ENCODE measurements at regions of chr14 and their contacts with region 1.

Region 1: DNA sequence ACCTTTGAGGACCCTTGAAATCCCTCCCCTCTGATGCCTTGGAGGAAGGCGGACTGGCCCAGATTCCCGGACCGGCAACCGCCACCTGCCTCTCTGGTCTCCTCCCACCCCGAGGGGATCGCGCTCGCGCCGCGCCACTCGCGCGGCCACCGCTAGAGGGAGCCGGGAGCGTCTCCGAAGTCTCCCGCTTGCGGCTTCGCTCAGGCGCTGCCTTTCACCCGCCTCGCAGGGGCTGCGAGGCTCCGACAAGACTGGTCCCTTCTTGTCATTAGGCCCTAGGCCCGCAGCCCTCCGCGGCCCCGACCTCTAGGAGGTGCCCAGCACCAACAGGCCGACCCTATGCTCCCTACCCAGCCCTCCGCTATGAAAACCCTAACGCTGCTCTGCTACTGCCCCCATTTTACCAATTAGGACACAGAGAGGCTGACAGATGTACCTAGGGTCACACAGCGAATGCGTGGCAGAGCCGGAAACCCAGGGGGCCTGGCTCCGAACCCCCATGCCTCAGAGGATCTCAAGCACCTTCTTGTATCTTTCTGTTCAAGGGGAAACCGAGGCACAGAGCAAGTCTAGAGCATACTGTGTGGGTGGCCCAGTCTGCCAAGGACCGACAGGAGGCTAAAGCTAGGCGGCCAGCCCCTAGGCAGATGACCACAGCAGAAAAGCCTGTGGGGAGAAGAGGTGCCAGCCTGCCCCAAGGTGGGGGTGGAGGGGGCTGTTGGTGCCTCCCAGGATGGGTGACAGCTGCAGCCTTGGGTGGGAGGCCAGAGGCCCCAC is 21.4 kb upstream of the VSX2 start:
- DNase-seq: peak; percentile 47
- H3K4me3 ChIP-seq: peak overlapping the region in 1 of 3 experiments; percentile 22
- H3K27ac ChIP-seq: no peak overlapping the region
- H3K4me1 ChIP-seq: no peaks in the 10 kb centered on the region
- H3K27me3 ChIP-seq: peaks cover 5% of the 10 kb centered on the region
- CTCF ChIP-seq: peak; percentile 73 to 96

Region 2: GRCh38 chr14:74135426-74135825 is 82.4 kb before region 1 on chr14:
- CTCF ChIA-PET with region 1: no interaction called
- dilution Hi-C with region 1: loop called (anchors 5 kb)
- in situ Hi-C with region 1: no loop called
- intact Hi-C with region 1: no loop called
- DNase-seq: peak; percentile 19
- H3K4me3 ChIP-seq: no peak overlapping the region
- H3K27ac ChIP-seq: no peak overlapping the region
- H3K4me1 ChIP-seq: no peaks in the 10 kb centered on the region
- H3K27me3 ChIP-seq: no peaks in the 10 kb centered on the region
- CTCF ChIP-seq: no peak

Region 3: DNA sequence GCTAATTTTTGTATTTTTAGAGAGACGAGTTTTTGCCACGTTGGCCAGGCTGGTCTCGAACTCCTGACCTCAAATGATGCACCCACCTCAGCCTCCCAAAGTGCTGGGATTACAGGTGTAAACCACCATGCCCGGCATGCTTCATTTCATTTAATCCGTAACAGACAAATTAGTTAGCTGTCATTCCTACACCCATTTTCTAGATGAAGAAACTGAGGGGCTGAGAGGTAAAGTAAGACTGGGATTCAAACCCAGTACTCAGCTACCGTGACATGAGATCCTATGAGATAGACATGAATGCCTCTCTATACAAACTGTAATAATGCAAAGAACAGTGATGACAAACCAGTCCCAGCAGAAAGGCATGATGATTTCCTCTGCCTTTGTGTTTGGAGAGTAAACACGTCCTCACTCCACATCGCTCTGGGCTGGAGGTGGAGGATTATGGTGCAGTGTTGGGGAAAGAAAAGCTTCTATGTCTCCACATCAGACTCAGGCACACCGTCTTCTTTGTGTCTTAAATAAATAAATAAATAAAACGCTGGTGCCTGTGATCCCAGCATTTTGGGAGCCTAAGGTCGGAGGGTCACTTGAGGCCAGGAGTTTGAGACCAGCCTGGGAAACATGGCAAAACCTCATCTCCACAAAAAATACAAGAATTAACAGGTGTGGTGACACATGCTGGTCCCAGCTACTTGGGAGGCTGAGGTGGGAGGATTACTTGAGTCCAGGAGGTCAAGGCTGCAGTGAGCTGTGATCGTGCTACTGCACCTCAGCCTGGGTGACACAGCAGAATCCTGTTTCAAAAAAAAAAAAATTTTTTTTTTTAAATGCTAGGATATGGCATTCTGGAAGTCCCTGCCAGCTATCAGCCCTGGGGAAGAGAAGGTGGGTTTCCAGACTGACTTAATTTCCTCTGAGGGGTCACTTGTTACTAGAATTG is 31.8 kb after region 1 on chr14:
- CTCF ChIA-PET with region 1: no interaction called
- dilution Hi-C with region 1: no loop called
- in situ Hi-C with region 1: no loop called
- intact Hi-C with region 1: loop called (anchors 1 kb)
- DNase-seq: no peak
- H3K4me3 ChIP-seq: no peak overlapping the region
- H3K27ac ChIP-seq: no peak overlapping the region
- H3K4me1 ChIP-seq: no peaks in the 10 kb centered on the region
- H3K27me3 ChIP-seq: peaks cover 6% of the 10 kb centered on the region
- CTCF ChIP-seq: no peak

Region 4: DNA sequence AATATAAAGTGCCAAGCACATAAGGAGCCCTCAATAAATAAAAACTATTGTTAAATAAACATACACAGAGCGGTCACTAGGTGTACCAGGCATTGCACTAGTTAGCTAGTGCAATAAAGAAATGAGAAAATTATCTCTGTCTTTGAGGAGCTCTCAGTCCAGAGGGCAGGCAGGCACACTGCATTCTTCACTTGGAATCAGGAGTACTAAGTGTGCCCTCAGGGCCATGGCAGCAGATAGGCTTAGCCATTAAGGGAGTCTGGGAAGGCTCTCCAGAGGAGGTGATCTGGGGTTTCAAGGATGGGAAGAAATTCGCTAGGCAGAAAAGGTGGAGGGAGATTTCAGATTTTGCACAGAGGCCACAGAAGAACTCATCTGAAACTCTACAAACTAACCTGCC is 75.7 kb after region 1 on chr14:
- CTCF ChIA-PET with region 1: no interaction called
- dilution Hi-C with region 1: loop called (anchors 5 kb)
- in situ Hi-C with region 1: no loop called
- intact Hi-C with region 1: loop called (anchors 1 kb)
- DNase-seq: no peak
- H3K4me3 ChIP-seq: no peak overlapping the region
- H3K27ac ChIP-seq: no peak overlapping the region
- H3K4me1 ChIP-seq: no peaks in the 10 kb centered on the region
- H3K27me3 ChIP-seq: no peaks in the 10 kb centered on the region
- CTCF ChIP-seq: no peak

Region 5: GRCh38 chr14:74302634-74303577 is 85.0 kb after region 1 on chr14 and contains the start of gene ABCD4:
- CTCF ChIA-PET with region 1: no interaction called
- dilution Hi-C with region 1: loop called (anchors 5 kb)
- in situ Hi-C with region 1: no loop called
- intact Hi-C with region 1: no loop called
- DNase-seq: peak; percentile 87
- H3K4me3 ChIP-seq: peak within 1 kb of the TSS; percentile 81 to 99 (median 85)
- H3K27ac ChIP-seq: peak within 1 kb of the TSS; percentile 62
- H3K4me1 ChIP-seq: peaks cover 6% of the 10 kb centered on the region
- H3K27me3 ChIP-seq: no peaks in the 10 kb centered on the region
- CTCF ChIP-seq: peak; percentile 42 to 61
- total RNA-seq, gene ABCD4: 30.1 to 31.0 TPM

Measured in mammary epithelial cell (primary cell).